Activated CD4-positive, alpha-beta T cell treated with anti-CD3 and anti-CD28 coated beads for 36 hours (primary cell): ENCODE measurements at regions of chr15 and their contacts with region 1.

Region 1: GRCh38 chr15:56411122-56411749 is 46.0 kb downstream of the TEX9 start:
- DNase-seq: no peak
- ATAC-seq: peak; percentile 49
- H3K4me3 Mint-ChIP-seq: no peak overlapping the region
- H3K27ac Mint-ChIP-seq: no peak overlapping the region
- H3K4me1 Mint-ChIP-seq: peaks cover 3% of the 10 kb centered on the region
- H3K27me3 Mint-ChIP-seq: no peaks in the 10 kb centered on the region

Region 2: GRCh38 chr15:56353119-56353518 is 58.1 kb before region 1 on chr15:
- CTCF ChIA-PET with region 1: no interaction called
- POLR2A ChIA-PET with region 1: no interaction called
- intact Hi-C with region 1: loop called in 1 of 2 experiments (anchors 5 kb)
- DNase-seq: no peak
- ATAC-seq: no peak
- H3K4me3 Mint-ChIP-seq: no peak overlapping the region
- H3K27ac Mint-ChIP-seq: no peak overlapping the region
- H3K4me1 Mint-ChIP-seq: no peaks in the 10 kb centered on the region
- H3K27me3 Mint-ChIP-seq: peaks cover 3% of the 10 kb centered on the region

Region 3: GRCh38 chr15:56428821-56429458 is 17.7 kb after region 1 on chr15:
- CTCF ChIA-PET with region 1: interaction called, 14 read pairs
- POLR2A ChIA-PET with region 1: no interaction called
- intact Hi-C with region 1: no loop called
- DNase-seq: no peak
- ATAC-seq: no peak
- H3K4me3 Mint-ChIP-seq: no peak overlapping the region
- H3K27ac Mint-ChIP-seq: no peak overlapping the region
- H3K4me1 Mint-ChIP-seq: no peaks in the 10 kb centered on the region
- H3K27me3 Mint-ChIP-seq: peaks cover 3% of the 10 kb centered on the region